Right ventricle myocardium inferior (tissue), 1 donor: ENCODE measurements at regions of chr1 and their contacts with region 1.

Region 1: DNA sequence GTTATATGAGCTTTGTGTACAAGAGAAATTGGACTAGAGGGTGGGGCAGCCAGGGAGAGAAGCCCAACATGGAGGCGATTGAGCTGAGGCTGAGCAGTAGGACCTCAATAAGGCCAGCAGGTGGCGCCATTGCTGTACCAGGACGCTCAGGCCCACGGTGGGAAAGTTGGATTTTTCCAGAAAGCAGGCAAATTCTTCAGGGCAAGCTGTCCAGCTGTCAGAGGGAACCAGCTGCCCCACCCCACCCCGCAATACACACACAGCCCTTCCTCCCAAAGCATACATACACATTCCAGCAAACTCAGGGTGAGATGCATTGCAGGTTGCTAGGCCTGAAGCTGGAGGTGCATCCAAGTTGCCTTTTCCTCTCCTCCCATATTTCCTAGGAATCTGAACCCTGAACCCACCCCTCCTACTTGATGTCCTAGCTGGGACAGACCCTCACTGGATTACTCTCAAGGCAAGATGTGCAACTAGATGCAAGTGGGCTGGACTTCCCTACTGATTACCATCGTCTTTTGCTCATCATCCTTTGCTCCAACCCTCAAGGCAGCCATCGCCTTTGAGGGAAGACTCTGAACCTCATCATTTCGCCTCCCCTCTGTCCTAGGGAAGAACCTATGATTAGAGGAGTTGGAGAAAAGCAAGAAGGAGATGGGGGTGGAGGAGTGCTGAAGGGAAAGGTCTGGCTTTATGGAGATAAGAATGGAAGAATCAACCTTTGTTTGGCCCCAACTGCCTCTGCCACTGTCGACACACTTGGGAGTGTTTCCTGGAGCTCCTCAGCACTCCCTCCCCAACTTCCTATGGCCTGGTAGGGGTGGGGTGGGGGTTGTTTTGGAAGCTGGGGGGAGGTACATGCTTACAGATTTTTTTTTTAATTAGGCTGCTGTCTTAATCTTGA is 25.5 kb downstream of the CD34 start:
- DNase-seq: peak; percentile 92
- ATAC-seq: peak; percentile 89

Region 2: DNA sequence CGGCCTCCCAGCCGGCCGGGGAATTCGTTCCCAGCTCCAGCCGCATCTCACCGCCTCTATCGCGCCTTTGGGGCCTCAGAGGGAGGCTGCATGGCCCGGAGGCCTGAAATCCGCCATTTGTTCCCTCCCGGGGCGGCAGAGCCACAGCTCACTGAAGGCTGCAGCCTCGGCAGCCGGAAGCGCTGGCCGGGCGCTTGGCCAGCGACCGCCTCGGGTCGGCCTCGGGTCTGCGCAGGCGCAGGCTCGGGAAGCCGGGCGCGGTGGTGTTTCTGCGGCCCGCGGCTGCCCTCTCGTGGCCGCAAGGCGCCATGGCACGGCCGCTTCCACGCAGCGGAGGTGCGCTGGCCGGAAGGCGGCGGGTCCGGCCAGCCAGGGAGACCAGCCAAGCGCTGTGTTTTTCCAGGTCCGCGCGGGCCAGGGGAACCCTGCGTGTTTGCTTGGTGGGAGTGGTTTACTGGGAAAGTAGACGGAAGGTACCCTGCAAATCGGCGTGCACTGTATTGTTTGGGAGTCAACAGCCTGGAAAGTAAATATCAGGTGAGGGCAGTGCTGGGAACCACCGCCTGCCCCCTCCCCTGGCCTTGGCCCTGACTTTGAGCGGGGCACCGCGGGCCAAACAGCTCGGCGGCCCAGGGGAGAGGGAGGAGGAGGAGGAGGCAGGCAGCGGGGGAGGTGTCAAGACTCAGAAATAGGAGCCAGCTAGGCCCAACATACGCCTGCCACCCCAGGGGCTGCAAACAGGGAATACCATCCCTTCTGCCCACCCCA is 78.2 kb after region 1 on chr1:
- intact Hi-C with region 1: loop called (anchors 1 kb)
- DNase-seq: peak; percentile 97
- ATAC-seq: peak; percentile 75

Region 3: DNA sequence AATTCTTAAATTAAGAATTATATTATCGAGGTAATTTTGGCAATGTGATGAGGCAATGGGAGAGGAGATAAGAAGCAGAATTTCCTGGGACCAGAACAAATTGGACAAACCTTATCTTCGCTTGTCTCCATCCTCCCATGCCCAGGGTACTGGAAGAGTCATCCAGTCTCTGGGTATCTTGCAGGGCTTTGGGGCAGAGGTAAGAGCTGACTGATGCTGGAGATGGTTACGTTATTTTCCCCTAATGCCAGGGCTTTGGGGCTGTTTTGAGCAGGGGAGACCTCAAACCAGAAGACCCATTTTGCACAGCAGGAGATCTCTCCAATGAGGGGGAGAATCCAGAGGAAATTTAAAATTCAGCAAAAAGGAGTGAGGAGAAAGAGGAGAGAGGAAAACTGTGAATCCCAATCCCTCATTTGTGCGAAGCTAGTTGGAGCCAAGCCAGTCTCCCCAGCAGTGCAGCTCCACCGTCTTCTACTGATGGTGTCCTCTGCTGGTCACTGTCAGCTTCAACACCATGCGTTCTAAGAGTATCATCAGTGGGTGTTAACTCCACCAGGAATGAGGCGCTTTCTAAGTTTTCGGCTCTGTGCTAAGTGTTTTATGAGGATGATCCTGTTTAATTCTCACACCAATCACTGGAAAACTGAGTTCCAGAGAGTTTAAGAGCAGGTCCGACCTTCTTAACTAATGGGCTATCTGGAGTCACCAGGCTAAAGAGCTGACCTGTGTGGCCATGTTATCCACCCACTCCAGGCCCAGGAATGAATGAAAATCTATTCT is 112.3 kb after region 1 on chr1:
- intact Hi-C with region 1: loop called (anchors 2 kb)
- DNase-seq: peak; percentile 86
- ATAC-seq: peak; percentile 86